ENCODE measurements at regions of chr17 and their contacts with region 1.

Region 1: GRCh38 chr17:80263253-80264204 is 2.9 kb downstream of the RNF213 start:
- DNase-seq: peak; percentile 83 to 91 (median 89)
- ATAC-seq: peak; percentile 46 to 85 (median 62)
- H3K4me3 ChIP-seq: peak overlapping the region; percentile 17 to 99 (median 55)
- H3K27ac ChIP-seq: peak overlapping the region; percentile 45 to 100 (median 98)
- H3K4me1 ChIP-seq: peaks cover 6 to 79% (median 32%) of the 10 kb centered on the region in 12 donors
- H3K27me3 ChIP-seq: no peaks in the 10 kb centered on the region
- CTCF ChIP-seq: peak in 3 of 12 donors; percentile 12 to 31 (median 22)
- POLR2A ChIP-seq: peak in 1 of 2 donors; percentile 58

Region 2: GRCh38 chr17:80101011-80101945 is 162.3 kb before region 1 on chr17 and contains the start of gene GAA:
- intact Hi-C with region 1: loop called in 2 of 10 experiments (anchors 5 kb)
- DNase-seq: peak; percentile 89 to 96 (median 89)
- ATAC-seq: peak; percentile 75 to 91 (median 84)
- H3K4me3 ChIP-seq: peak within 1 kb of the TSS; percentile 68 to 99 (median 90)
- H3K27ac ChIP-seq: peak within 1 kb of the TSS; percentile 36 to 98 (median 91)
- H3K4me1 ChIP-seq: peaks cover 0 to 23% (median 7%) of the 10 kb centered on the region in 12 donors
- H3K27me3 ChIP-seq: no peaks in the 10 kb centered on the region
- CTCF ChIP-seq: peak; percentile 50 to 98 (median 88)
- POLR2A ChIP-seq: peak in 1 of 2 donors; percentile 82
- total RNA-seq, gene GAA: 27.5 to 109 (median 48.0) TPM

Region 3: GRCh38 chr17:80219013-80219762 is 44.3 kb before region 1 on chr17:
- intact Hi-C with region 1: loop called in 1 of 10 experiments (anchors 5 kb)
- DNase-seq: peak; percentile 61 to 86 (median 69)
- ATAC-seq: peak in 3 of 4 donors; percentile 49 to 69 (median 55)
- H3K4me3 ChIP-seq: peak overlapping the region; percentile 79 to 100 (median 96)
- H3K27ac ChIP-seq: peak overlapping the region; percentile 49 to 92 (median 78)
- H3K4me1 ChIP-seq: peaks cover 0 to 31% (median 15%) of the 10 kb centered on the region in 12 donors
- H3K27me3 ChIP-seq: no peaks in the 10 kb centered on the region
- CTCF ChIP-seq: no peak
- POLR2A ChIP-seq: no peak